OCI-LY7 (cell line): ENCODE measurements at regions of chr11 and their contacts with region 1.

Region 1: DNA sequence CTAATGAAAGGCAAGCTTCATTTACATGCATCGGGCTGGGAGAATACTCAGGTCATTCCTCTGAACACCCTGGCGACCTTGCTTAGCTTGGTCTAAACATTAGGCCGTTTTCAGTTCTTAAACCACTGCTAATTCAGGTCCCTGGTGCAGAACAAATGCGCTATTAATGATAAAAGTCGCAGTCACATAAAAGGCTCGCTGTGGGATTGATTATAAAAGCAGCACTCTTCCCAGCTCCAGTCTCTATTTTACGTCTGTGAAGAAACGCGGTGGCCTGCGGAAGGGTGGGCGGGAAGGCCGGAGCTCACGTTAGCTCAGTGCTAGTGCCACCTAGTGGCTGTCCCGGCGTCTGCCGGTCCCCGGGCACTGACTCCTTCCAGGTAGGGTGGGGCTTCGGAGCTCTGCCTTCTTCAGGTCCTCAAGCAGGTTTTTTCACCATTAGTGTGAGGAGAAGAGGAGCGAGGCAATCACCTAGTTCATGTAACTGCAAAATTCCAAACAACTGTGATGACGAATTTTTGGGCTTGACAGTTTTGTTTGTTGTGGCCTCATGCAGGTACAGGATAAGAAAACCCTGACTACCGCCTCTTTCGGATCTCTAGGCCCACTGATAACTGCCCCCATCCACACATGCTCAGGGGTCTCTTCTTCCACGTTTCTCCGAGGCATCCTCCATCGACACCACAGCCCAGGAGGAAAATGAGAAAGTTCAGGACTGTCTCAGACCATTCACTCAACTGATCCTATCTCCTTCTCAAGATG is 66.5 kb upstream of the CLMP start:
- DNase-seq: peak; percentile 80
- H3K4me3 ChIP-seq: no peak overlapping the region
- H3K27ac ChIP-seq: peak overlapping the region; percentile 43
- H3K4me1 ChIP-seq: peaks cover 64% of the 10 kb centered on the region
- CTCF ChIP-seq: peak; percentile 98

Region 2: DNA sequence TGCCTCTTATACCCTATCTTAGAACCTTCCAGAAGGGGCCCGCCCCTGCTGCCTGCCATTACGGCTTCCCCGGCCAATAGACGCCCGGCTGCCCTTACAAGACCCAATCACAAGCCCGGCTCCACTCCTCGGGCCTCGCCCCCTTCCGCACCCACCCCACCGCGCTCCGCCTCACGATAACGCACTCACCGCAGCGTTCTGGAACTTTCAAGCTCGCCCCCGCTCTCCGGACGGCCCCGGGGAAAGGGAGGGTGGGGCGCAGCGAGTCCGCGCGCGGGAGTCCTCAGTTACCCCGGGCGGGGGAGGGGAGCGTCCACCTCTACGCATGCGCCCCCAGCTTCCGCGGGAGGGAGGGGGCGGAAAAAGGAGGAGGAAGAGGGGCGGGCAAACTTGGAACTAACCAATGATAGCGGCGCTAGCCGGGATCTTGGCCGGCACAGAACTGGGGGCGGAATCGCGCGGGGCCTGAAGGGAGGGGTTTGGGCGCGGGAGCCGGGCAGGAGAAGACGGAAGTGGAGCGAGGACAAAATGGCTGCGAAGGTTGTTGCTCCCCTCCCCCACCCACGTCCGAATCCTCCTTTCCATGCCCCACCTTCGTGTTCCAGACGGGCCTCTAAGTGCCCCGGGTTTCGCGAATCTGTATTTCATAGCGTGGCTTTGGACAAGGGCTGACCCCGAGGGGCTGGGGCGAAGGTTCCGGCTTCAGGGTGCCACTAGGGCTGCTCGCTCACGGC is 199.2 kb before region 1 on chr11:
- CTCF ChIA-PET with region 1: interaction called, 3 read pairs
- POLR2A ChIA-PET with region 1: interaction called, 7 read pairs
- intact Hi-C with region 1: loop called (anchors 5 kb)
- DNase-seq: peak; percentile 98
- H3K4me3 ChIP-seq: peak overlapping the region; percentile 96
- H3K27ac ChIP-seq: peak overlapping the region; percentile 92
- H3K4me1 ChIP-seq: peaks cover 53% of the 10 kb centered on the region
- CTCF ChIP-seq: no peak

Region 3: GRCh38 chr11:123301696-123302400 is 40.3 kb after region 1 on chr11:
- CTCF ChIA-PET with region 1: interaction called, 6 read pairs
- POLR2A ChIA-PET with region 1: interaction called, 4 read pairs
- intact Hi-C with region 1: loop called (anchors 1 kb)
- DNase-seq: no peak
- H3K4me3 ChIP-seq: no peak overlapping the region
- H3K27ac ChIP-seq: peak overlapping the region; percentile 95
- H3K4me1 ChIP-seq: peaks cover 60% of the 10 kb centered on the region
- CTCF ChIP-seq: peak; percentile 71

Region 4: GRCh38 chr11:123316003-123316402 is 54.5 kb after region 1 on chr11:
- CTCF ChIA-PET with region 1: no interaction called
- POLR2A ChIA-PET with region 1: no interaction called
- intact Hi-C with region 1: no loop called
- DNase-seq: no peak
- H3K4me3 ChIP-seq: no peak overlapping the region
- H3K27ac ChIP-seq: no peak overlapping the region
- H3K4me1 ChIP-seq: no peaks in the 10 kb centered on the region
- CTCF ChIP-seq: no peak